H1 (cell line): ENCODE measurements at regions of chr3 and their contacts with region 1.

Region 1: DNA sequence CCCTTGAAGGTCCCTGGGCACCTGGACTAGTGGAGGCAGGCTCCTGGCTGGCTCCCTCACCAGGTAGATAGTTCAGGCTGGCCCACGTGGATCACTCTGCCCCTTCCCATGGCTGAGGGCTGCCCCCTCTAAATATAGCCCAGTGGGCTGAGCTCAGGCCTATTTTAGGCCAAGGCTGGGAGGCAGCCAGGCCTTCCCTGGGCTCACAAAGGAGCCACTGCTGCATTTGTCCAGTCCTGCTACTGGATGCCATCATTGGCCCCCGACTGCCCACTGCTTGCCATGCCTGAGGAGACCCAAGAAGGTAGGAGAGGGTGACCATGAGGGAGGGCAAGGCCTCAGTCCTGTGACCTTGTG is at the start of gene LSMEM2:
- DNase-seq: no peak
- H3K4me3 ChIP-seq: no peak within 1 kb of the TSS
- H3K27ac ChIP-seq: no peak within 1 kb of the TSS
- H3K4me1 ChIP-seq: peaks cover 0 to 12% (median 7%) of the 10 kb centered on the region in 4 experiments; a peak in 5 of 7 replicates
- H3K27me3 ChIP-seq: peaks cover 20 to 41% (median 34%) of the 10 kb centered on the region in 4 experiments
- CTCF ChIP-seq: no peak
- EP300 ChIP-seq: no peak
- POLR2A ChIP-seq: no peak
- RAD21 ChIP-seq: no peak
- total RNA-seq, gene LSMEM2: 0.57 and 0.58 TPM in 2 replicates

Region 2: GRCh38 chr3:50267280-50267913 is 11.4 kb before region 1 on chr3:
- CTCF ChIA-PET with region 1: interaction called, 149 read pairs
- POLR2A ChIA-PET with region 1: interaction called, 17 read pairs
- DNase-seq: peak in 1 of 2 experiments; percentile 69
- H3K4me3 ChIP-seq: peak overlapping the region in 1 of 4 experiments; percentile 24; a peak in 1 of 8 replicates
- H3K27ac ChIP-seq: no peak overlapping the region
- H3K4me1 ChIP-seq: peaks cover 0 to 48% (median 36%) of the 10 kb centered on the region in 4 experiments; a peak in 6 of 7 replicates
- H3K27me3 ChIP-seq: peaks cover 0 to 3% (median 0%) of the 10 kb centered on the region in 4 experiments; a peak in 3 of 7 replicates
- CTCF ChIP-seq: no peak
- EP300 ChIP-seq: no peak
- POLR2A ChIP-seq: no peak
- RAD21 ChIP-seq: no peak